Endothelial cell of umbilical vein (primary cell): ENCODE measurements at regions of chr3 and their contacts with region 1.

Region 1: DNA sequence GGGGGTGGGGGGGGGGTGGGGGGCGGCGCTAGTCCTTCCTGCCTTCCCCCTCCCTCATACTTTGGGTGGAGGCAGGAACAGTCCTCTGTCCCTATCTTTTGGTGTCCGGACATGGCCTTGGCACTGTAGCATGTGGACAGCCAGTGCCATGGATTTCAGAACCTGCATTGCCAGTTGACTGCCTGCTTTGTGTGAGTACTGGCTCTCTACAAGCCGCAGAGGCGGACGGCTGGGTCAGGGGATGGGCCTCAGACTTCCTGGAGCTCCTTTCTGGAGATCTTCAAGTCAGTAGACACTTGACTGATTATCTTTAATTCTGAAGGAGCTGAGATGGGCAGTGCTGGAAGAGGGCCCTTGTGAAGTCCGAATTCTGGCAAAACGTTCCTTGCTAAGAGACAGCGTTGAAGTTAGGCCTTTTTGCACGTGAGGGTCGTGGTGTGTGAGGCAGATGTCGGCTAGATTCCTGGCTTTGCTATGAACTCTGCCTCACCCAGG is 2.5 kb downstream of the CLDN11 start:
- DNase-seq: peak; percentile 21
- H3K4me3 ChIP-seq: peak overlapping the region in 2 of 3 experiments; percentile 65 to 86
- H3K27ac ChIP-seq: peak overlapping the region; percentile 46
- H3K4me1 ChIP-seq: peaks cover 53% of the 10 kb centered on the region
- H3K27me3 ChIP-seq: no peaks in the 10 kb centered on the region
- CTCF ChIP-seq: no peak
- POLR2A ChIP-seq: peak; percentile 52

Region 2: GRCh38 chr3:170346481-170347392 is 74.5 kb before region 1 on chr3:
- CTCF ChIA-PET with region 1: no interaction called
- POLR2A ChIA-PET with region 1: no interaction called
- dilution Hi-C with region 1: no loop called
- intact Hi-C with region 1: no loop called
- DNase-seq: no peak
- H3K4me3 ChIP-seq: no peak overlapping the region
- H3K27ac ChIP-seq: no peak overlapping the region
- H3K4me1 ChIP-seq: peaks cover 13% of the 10 kb centered on the region
- H3K27me3 ChIP-seq: no peaks in the 10 kb centered on the region
- CTCF ChIP-seq: no peak
- POLR2A ChIP-seq: no peak

Region 3: GRCh38 chr3:170405101-170405500 is 16.1 kb before region 1 on chr3:
- CTCF ChIA-PET with region 1: no interaction called
- POLR2A ChIA-PET with region 1: no interaction called
- dilution Hi-C with region 1: no loop called
- intact Hi-C with region 1: no loop called
- DNase-seq: no peak
- H3K4me3 ChIP-seq: no peak overlapping the region
- H3K27ac ChIP-seq: no peak overlapping the region
- H3K4me1 ChIP-seq: no peaks in the 10 kb centered on the region
- H3K27me3 ChIP-seq: no peaks in the 10 kb centered on the region
- CTCF ChIP-seq: no peak
- POLR2A ChIP-seq: no peak

Region 4: DNA sequence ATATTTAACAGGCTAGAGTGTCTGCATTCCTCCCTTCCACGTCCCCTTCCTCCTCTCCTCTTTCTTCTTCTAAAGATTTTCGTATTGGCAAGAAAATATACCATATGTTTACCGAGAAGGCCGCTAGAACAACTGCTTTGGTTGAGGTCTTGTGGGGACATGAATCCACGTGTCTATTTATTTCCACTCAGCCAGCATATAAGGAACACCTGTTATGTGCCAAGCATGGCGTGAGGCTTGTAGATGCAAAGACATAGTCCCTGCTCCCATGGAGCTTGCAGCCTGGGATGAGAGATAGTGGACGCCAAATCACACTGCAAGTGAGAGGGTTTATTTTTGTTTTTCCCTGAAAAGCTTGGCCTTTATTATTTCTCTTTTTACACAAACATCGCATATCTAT is 107.5 kb after region 1 on chr3:
- CTCF ChIA-PET with region 1: no interaction called
- POLR2A ChIA-PET with region 1: no interaction called
- dilution Hi-C with region 1: no loop called
- intact Hi-C with region 1: loop called (anchors 1 kb)
- DNase-seq: no peak
- H3K4me3 ChIP-seq: no peak overlapping the region
- H3K27ac ChIP-seq: no peak overlapping the region
- H3K4me1 ChIP-seq: peaks cover 2% of the 10 kb centered on the region
- H3K27me3 ChIP-seq: no peaks in the 10 kb centered on the region
- CTCF ChIP-seq: no peak
- POLR2A ChIP-seq: no peak